ENCODE measurements at regions of chr5 and their contacts with region 1.

Region 1: GRCh38 chr5:169197343-169197742 is 103.6 kb downstream of the SLIT3 start:
- DNase-seq: no peak
- ATAC-seq: peak; percentile 37; the same call in 2 of the 3 replicates
- H3K4me3 ChIP-seq: no peak overlapping the region
- H3K27ac ChIP-seq: no peak overlapping the region
- H3K4me1 ChIP-seq: no peaks in the 10 kb centered on the region
- H3K27me3 ChIP-seq: peaks cover 0 to 2% of the 10 kb centered on the region in 2 experiments; a peak in 1 of 5 replicates
- CTCF ChIP-seq: peak; percentile 34
- EP300 ChIP-seq: no peak
- POLR2A ChIP-seq: no peak
- RAD21 ChIP-seq: no peak

Region 2: GRCh38 chr5:167908606-167909005 is 1288.7 kb before region 1 on chr5:
- CTCF ChIA-PET with region 1: no interaction called
- POLR2A ChIA-PET with region 1: no interaction called
- in situ Hi-C with region 1: no loop called
- intact Hi-C with region 1: loop called (anchors 5 kb)
- DNase-seq: no peak
- ATAC-seq: no peak
- H3K4me3 ChIP-seq: no peak overlapping the region
- H3K27ac ChIP-seq: no peak overlapping the region
- H3K4me1 ChIP-seq: no peaks in the 10 kb centered on the region
- H3K27me3 ChIP-seq: no peaks in the 10 kb centered on the region; a peak in 1 of 5 replicates
- CTCF ChIP-seq: no peak
- EP300 ChIP-seq: no peak
- POLR2A ChIP-seq: no peak
- RAD21 ChIP-seq: no peak

Region 3: GRCh38 chr5:169183576-169183975 is 13.8 kb before region 1 on chr5:
- CTCF ChIA-PET with region 1: no interaction called
- POLR2A ChIA-PET with region 1: no interaction called
- in situ Hi-C with region 1: no loop called
- intact Hi-C with region 1: no loop called
- DNase-seq: no peak
- ATAC-seq: no peak
- H3K4me3 ChIP-seq: no peak overlapping the region
- H3K27ac ChIP-seq: no peak overlapping the region
- H3K4me1 ChIP-seq: no peaks in the 10 kb centered on the region
- H3K27me3 ChIP-seq: no peaks in the 10 kb centered on the region
- CTCF ChIP-seq: no peak
- EP300 ChIP-seq: no peak
- POLR2A ChIP-seq: no peak
- RAD21 ChIP-seq: no peak

Region 4: DNA sequence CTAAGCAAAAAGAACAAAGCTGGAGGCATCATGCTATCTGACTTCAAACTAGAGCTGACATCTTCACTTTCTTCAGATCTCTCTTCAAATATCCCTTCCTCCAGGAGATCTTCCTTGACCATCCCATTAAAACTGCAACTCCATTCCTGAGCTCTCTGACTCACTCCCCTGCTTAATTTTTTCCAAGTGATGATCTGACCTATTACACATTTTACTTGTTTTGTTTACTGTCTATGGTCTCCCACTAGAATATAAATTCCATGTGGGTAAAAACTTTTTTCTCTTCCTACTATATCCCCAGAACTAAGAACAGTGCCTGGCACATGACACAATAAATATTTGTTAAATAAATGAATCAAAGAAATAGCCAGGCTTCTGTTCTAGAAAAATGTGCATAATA is 16.1 kb after region 1 on chr5:
- CTCF ChIA-PET with region 1: no interaction called
- POLR2A ChIA-PET with region 1: no interaction called
- in situ Hi-C with region 1: no loop called
- intact Hi-C with region 1: loop called (anchors 1 kb)
- DNase-seq: no peak
- ATAC-seq: no peak
- H3K4me3 ChIP-seq: no peak overlapping the region
- H3K27ac ChIP-seq: no peak overlapping the region
- H3K4me1 ChIP-seq: peaks cover 2% of the 10 kb centered on the region
- H3K27me3 ChIP-seq: no peaks in the 10 kb centered on the region
- CTCF ChIP-seq: no peak
- EP300 ChIP-seq: no peak
- POLR2A ChIP-seq: no peak
- RAD21 ChIP-seq: no peak

Measured in HepG2 (cell line).